A673 (cell line): ENCODE measurements at regions of chr4 and their contacts with region 1.

Region 1: DNA sequence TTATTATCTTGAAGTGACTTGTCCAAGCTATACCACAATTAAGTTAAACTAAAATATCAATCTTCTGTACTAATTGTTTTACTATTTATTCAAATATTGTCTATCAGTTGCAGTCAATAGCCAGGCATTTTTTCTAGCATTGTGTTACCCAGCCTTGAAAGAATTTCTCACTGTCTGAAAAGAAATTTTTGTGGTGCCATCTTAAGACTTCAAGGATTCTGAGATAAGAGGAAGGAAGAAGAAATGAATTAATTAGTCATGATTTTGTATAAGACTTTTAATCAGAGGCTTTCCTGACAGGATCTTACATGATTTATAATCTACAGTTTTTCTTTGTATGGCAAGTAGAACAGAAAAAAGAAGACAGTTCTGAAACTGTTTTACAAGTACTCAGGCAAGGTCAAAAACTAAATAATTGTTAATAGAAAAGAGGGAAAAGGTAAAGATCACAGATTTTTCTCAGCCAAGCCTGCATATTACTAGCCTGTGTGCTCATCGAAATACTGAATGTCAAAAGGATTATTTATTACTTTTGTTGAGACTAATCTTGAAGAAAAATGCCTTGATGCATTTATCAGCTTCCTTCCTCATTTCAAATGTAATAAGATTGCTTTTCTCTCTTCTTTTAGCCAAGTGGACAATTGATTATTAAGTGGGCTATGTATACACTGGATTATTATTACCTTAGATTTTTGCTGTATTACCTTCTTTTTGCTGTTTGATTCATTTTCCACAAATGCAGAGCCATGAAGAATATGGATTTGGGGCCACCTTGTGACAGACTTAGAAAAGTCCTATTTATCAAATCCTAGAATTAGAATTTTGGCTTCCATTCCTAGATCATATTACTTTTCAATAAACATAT is 53.8 kb downstream of the CXCL1 start:
- DNase-seq: peak; percentile 27
- H3K4me3 ChIP-seq: no peak overlapping the region
- H3K27ac ChIP-seq: no peak overlapping the region
- H3K4me1 ChIP-seq: no peaks in the 10 kb centered on the region
- H3K27me3 ChIP-seq: no peaks in the 10 kb centered on the region
- CTCF ChIP-seq: peak; percentile 47; the same call in 1 of the 2 replicates

Region 2: DNA sequence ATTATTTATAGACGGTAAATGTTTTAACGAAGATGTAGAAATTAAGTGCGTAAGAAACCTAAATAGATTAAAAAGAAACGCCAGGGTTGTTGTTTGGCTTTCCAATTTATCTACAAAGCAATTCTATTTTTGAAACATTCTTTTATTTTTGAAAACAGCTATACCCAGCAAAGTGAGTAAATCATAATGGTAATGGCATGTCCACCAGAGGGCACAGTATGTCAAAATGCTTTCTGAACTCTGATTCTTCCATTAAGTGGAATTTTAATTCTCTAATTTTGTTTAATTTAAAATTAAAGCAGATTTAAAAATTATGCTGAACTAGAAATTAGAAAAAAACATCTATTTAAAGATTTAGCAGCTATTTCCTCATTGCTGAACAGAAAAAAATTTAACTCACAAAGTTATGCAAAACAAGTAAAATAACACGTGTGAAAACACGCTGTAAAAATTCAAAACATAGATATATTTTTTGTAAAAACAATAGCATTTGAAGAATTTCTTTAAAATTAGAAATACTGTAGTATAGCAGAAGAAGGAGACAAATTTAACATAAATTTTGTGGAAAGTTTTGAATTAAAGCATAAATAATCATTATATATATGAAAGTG is 329.3 kb before region 1 on chr4:
- CTCF ChIA-PET with region 1: no interaction called
- POLR2A ChIA-PET with region 1: no interaction called
- intact Hi-C with region 1: loop called (anchors 10 kb)
- DNase-seq: no peak
- H3K4me3 ChIP-seq: no peak overlapping the region
- H3K27ac ChIP-seq: no peak overlapping the region
- H3K4me1 ChIP-seq: peaks cover 9% of the 10 kb centered on the region
- H3K27me3 ChIP-seq: no peaks in the 10 kb centered on the region
- CTCF ChIP-seq: peak; percentile 48

Region 3: DNA sequence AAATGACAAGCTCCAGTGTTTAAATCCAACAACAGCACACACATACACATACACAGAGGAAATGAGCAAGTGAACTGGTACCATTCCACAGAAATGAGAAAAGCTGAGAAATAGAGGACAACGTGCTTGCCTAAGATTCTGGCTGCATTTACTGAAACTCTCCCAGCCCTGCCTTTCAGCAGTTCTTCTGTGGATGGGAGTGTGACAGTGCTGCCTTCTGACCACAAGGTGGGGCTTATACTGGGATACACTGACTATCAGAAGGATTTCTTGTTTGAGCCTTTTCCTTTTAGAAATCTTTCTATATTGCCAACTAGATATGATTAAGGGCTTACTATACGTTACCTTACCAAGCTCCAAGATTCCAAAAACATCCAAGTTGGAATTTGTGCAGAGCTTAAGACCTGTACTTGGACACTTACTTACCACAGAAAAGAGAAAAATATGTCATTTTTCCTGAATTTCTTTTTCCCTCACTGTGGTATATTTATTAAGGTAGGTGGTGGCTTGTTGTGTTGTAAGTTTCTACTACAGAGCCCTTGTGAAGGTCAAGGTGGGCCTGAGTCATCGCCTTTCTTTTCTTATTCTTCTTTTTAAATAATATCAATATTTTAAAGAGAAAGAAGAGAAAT is 193.3 kb before region 1 on chr4:
- CTCF ChIA-PET with region 1: no interaction called
- POLR2A ChIA-PET with region 1: no interaction called
- intact Hi-C with region 1: loop called (anchors 5 kb)
- DNase-seq: peak; percentile 63
- H3K4me3 ChIP-seq: no peak overlapping the region
- H3K27ac ChIP-seq: no peak overlapping the region
- H3K4me1 ChIP-seq: no peaks in the 10 kb centered on the region
- H3K27me3 ChIP-seq: no peaks in the 10 kb centered on the region
- CTCF ChIP-seq: peak; percentile 69